ENCODE measurements at regions of chr12 and their contacts with region 1.

Region 1: GRCh38 chr12:774051-774614 is 21.8 kb downstream of the WNK1 start:
- DNase-seq: no peak
- ATAC-seq: no peak
- H3K4me3 ChIP-seq: no peak overlapping the region
- H3K4me3 Mint-ChIP-seq: peak overlapping the region; percentile 5
- H3K27ac ChIP-seq: peak overlapping the region in 1 of 2 donors; percentile 37
- H3K27ac Mint-ChIP-seq: peak overlapping the region; percentile 43
- H3K4me1 ChIP-seq: peaks cover 56% of the 10 kb centered on the region
- H3K4me1 Mint-ChIP-seq: peaks cover 93% of the 10 kb centered on the region
- H3K27me3 ChIP-seq: no peaks in the 10 kb centered on the region
- H3K27me3 Mint-ChIP-seq: no peaks in the 10 kb centered on the region
- CTCF ChIP-seq: no peak

Region 2: GRCh38 chr12:789852-790563 is 15.9 kb after region 1 on chr12:
- CTCF ChIA-PET with region 1: interaction called, 4 read pairs
- POLR2A ChIA-PET with region 1: interaction called, 10 read pairs
- intact Hi-C with region 1: loop called in 1 of 2 experiments (anchors 2 kb)
- DNase-seq: no peak
- ATAC-seq: peak; percentile 26
- H3K4me3 ChIP-seq: no peak overlapping the region
- H3K4me3 Mint-ChIP-seq: peak overlapping the region; percentile 64
- H3K27ac ChIP-seq: no peak overlapping the region
- H3K27ac Mint-ChIP-seq: peak overlapping the region; percentile 62
- H3K4me1 ChIP-seq: peaks cover 36% of the 10 kb centered on the region
- H3K4me1 Mint-ChIP-seq: peaks cover 91% of the 10 kb centered on the region
- H3K27me3 ChIP-seq: no peaks in the 10 kb centered on the region
- H3K27me3 Mint-ChIP-seq: no peaks in the 10 kb centered on the region
- CTCF ChIP-seq: no peak